Activated CD4-positive, alpha-beta memory T cell treated with anti-CD3 and anti-CD28 coated beads for 36 hours (primary cell): ENCODE measurements at regions of chr12 and their contacts with region 1.

Region 1: DNA sequence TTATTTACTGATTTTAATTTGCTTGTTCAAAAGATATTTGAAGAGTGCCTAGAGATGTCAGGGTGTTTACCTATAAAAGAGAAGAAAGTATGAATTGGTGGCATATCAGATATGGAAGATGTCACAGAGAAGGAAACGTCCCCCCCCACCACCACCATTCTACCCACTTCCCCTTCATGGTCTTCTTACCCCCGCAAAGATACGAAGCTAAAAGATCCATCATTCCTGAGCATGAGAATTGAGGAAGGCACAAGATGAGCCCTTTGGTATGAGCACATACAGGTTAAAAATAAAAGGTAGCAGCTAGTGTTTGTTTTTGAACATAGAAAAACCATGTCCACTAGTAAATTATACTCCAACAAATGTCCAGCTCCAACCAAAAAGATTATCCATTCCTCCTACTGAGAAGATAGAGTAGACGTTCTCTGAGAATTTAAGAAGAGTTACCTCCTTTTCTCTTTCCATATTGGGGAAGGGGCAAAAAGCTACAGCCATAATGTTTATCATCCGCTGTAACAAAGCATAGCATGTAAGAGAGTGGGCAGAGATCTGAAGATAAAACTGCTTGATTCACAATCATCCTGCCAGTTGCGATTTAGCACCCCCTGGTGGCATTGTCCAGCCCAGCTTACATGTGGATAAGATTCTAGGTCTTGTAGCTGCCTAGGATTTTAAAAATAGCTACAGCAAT is 29.1 kb downstream of the NFYB start:
- DNase-seq: peak; percentile 91
- H3K4me3 Mint-ChIP-seq: no peak overlapping the region
- H3K27ac Mint-ChIP-seq: no peak overlapping the region
- H3K4me1 Mint-ChIP-seq: peaks cover 11% of the 10 kb centered on the region
- H3K27me3 Mint-ChIP-seq: no peaks in the 10 kb centered on the region

Region 2: GRCh38 chr12:103877934-103878510 is 230.9 kb before region 1 on chr12:
- CTCF ChIA-PET with region 1: interaction called, 44 read pairs
- POLR2A ChIA-PET with region 1: no interaction called
- intact Hi-C with region 1: loop called (anchors 1 kb)
- DNase-seq: peak; percentile 70
- H3K4me3 Mint-ChIP-seq: no peak overlapping the region
- H3K27ac Mint-ChIP-seq: no peak overlapping the region
- H3K4me1 Mint-ChIP-seq: peaks cover 18% of the 10 kb centered on the region
- H3K27me3 Mint-ChIP-seq: no peaks in the 10 kb centered on the region

Region 3: DNA sequence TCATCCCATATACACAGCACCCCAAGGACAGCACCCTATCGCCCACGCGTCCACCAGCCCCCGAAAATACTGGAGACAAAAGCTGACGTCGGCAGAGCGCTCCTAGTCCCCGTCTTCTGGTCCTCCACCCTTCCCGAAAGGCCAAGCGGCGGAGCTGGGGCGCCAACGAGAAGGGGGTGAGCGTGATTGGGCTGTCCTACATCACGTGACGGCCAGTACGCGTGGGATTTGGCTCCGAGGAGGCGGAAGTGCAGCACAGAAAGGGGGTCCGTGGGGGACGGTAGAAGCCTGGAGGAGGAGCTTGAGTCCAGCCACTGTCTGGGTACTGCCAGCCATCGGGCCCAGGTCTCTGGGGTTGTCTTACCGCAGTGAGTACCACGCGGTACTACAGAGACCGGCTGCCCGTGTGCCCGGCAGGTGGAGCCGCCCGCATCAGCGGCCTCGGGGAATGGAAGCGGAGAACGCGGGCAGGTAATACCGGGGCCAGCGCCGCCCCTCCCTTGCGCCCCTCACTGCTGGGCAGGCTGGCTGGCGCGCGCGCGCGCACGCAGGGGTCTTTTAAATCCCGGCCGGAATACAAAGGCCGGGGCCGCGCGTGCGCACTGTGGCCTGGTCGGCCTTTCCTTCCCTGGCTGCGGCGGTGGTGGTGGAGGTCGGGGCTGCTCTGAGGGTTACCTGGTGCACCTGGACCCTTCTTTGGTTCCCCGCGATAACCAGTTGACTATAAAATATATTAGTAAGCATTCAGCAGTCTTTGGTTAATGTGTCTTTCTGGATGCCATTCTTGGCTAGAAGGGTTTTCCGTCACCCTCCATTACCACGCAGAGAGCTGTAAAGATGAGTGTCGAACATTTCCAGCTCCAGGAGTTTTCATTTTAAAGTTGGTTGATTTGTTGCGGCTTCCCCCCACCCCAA is 143.1 kb before region 1 on chr12 and contains the start of gene TDG:
- CTCF ChIA-PET with region 1: interaction called, 15 read pairs
- POLR2A ChIA-PET with region 1: interaction called, 5 read pairs
- intact Hi-C with region 1: loop called (anchors 5 kb)
- DNase-seq: peak; percentile 99
- H3K4me3 Mint-ChIP-seq: peak within 1 kb of the TSS; percentile 96
- H3K27ac Mint-ChIP-seq: peak within 1 kb of the TSS; percentile 96
- H3K4me1 Mint-ChIP-seq: peaks cover 53% of the 10 kb centered on the region
- H3K27me3 Mint-ChIP-seq: no peaks in the 10 kb centered on the region
- total RNA-seq, gene TDG: 29.1 to 29.7 TPM

Region 4: GRCh38 chr12:104064031-104064822 is 44.7 kb before region 1 on chr12 and contains the start of gene HCFC2:
- CTCF ChIA-PET with region 1: interaction called, 156 read pairs
- POLR2A ChIA-PET with region 1: interaction called, 3 read pairs
- intact Hi-C with region 1: no loop called
- DNase-seq: peak; percentile 93
- H3K4me3 Mint-ChIP-seq: peak within 1 kb of the TSS; percentile 97
- H3K27ac Mint-ChIP-seq: peak within 1 kb of the TSS; percentile 81
- H3K4me1 Mint-ChIP-seq: peaks cover 21% of the 10 kb centered on the region
- H3K27me3 Mint-ChIP-seq: peaks cover 12% of the 10 kb centered on the region
- total RNA-seq, gene HCFC2: 8.9 to 10.8 TPM

Region 5: GRCh38 chr12:104121001-104121400 is 12.1 kb after region 1 on chr12:
- CTCF ChIA-PET with region 1: interaction called, 36 read pairs
- POLR2A ChIA-PET with region 1: no interaction called
- intact Hi-C with region 1: no loop called
- DNase-seq: no peak
- H3K4me3 Mint-ChIP-seq: no peak overlapping the region
- H3K27ac Mint-ChIP-seq: no peak overlapping the region
- H3K4me1 Mint-ChIP-seq: no peaks in the 10 kb centered on the region
- H3K27me3 Mint-ChIP-seq: no peaks in the 10 kb centered on the region

Region 6: GRCh38 chr12:104137913-104138796 is 29.3 kb after region 1 on chr12 and contains the start of gene NFYB:
- CTCF ChIA-PET with region 1: interaction called, 15 read pairs
- POLR2A ChIA-PET with region 1: no interaction called
- intact Hi-C with region 1: no loop called
- DNase-seq: peak; percentile 95
- H3K4me3 Mint-ChIP-seq: peak within 1 kb of the TSS; percentile 83
- H3K27ac Mint-ChIP-seq: peak within 1 kb of the TSS; percentile 84
- H3K4me1 Mint-ChIP-seq: peaks cover 13% of the 10 kb centered on the region
- H3K27me3 Mint-ChIP-seq: no peaks in the 10 kb centered on the region
- total RNA-seq, gene NFYB: 23.6 to 24.5 TPM